H1 (cell line): ENCODE measurements at regions of chr17 and their contacts with region 1.

Region 1: GRCh38 chr17:73782641-73783381 is 138.6 kb upstream of the SDK2 start:
- DNase-seq: no peak
- H3K4me3 ChIP-seq: no peak overlapping the region
- H3K27ac ChIP-seq: no peak overlapping the region
- H3K4me1 ChIP-seq: peaks cover 7 to 32% (median 16%) of the 10 kb centered on the region in 4 experiments
- H3K27me3 ChIP-seq: no peaks in the 10 kb centered on the region; a peak in 1 of 7 replicates
- CTCF ChIP-seq: peak; percentile 70 to 87 (median 86)
- EP300 ChIP-seq: no peak
- POLR2A ChIP-seq: no peak
- RAD21 ChIP-seq: peak; percentile 80 to 90

Region 2: GRCh38 chr17:73770115-73770848 is 12.5 kb before region 1 on chr17:
- CTCF ChIA-PET with region 1: interaction called, 28 read pairs
- POLR2A ChIA-PET with region 1: interaction called, 3 read pairs
- DNase-seq: no peak
- H3K4me3 ChIP-seq: no peak overlapping the region
- H3K27ac ChIP-seq: no peak overlapping the region
- H3K4me1 ChIP-seq: no peaks in the 10 kb centered on the region; a peak in 1 of 7 replicates
- H3K27me3 ChIP-seq: no peaks in the 10 kb centered on the region
- CTCF ChIP-seq: no peak
- EP300 ChIP-seq: no peak
- POLR2A ChIP-seq: no peak
- RAD21 ChIP-seq: no peak

Region 3: DNA sequence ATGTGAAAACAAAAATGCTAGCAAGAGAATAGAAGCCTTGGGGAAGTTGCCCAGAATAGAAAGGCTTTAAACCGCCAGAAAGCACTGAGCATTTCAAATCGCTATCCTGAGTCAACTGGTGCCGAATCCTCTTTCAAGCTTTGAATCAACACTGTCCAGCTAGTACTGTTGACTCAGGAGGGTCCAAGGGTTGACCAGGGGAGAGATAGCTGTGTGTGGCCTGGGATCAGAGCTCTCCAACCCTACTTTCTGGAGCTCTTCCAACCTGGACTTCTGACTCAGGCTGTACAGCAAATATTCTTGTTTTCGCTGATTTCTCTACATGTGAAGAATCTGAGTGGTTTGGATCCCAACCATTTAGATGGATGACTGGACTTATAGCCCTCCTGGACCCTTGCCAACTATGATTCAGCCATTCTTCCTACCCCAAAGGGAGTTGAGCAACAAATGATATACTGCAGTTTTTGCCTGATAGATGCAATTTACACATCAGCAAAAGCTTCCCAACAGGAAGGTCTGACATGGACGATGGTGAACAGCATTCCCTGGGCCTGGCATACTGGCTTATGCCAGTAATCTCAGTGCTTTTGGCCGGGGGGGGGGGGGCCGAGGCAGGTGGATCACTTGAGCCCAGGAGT is 15.4 kb after region 1 on chr17:
- CTCF ChIA-PET with region 1: interaction called, 18 read pairs
- POLR2A ChIA-PET with region 1: no interaction called
- DNase-seq: no peak
- H3K4me3 ChIP-seq: no peak overlapping the region
- H3K27ac ChIP-seq: no peak overlapping the region
- H3K4me1 ChIP-seq: no peaks in the 10 kb centered on the region; a peak in 1 of 7 replicates
- H3K27me3 ChIP-seq: no peaks in the 10 kb centered on the region; a peak in 1 of 7 replicates
- CTCF ChIP-seq: no peak
- EP300 ChIP-seq: no peak
- POLR2A ChIP-seq: no peak
- RAD21 ChIP-seq: no peak

Region 4: DNA sequence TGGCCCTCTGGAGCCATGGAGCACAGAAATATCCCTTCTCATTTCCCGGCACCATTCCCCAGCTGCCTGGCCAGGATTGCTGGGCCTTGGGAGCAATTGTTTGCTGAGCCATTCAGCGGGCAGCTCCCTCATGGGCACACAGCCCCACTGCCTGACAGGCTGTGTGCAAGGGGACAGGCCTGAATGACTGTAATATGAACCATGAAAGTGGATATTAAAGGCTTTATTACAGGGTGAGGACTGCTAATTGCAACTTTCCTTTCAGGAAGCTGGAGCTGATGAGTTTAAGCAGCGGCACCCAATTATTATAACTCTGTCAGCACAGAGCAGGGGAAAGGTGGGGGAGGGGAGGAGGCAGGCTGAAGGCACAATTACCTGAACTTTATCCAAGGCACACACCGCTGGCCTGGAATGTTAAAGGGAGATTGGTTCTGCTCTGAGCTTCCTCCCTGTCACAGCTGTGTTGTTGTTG is 21.2 kb after region 1 on chr17:
- CTCF ChIA-PET with region 1: interaction called, 18 read pairs
- POLR2A ChIA-PET with region 1: no interaction called
- DNase-seq: no peak
- H3K4me3 ChIP-seq: no peak overlapping the region
- H3K27ac ChIP-seq: no peak overlapping the region
- H3K4me1 ChIP-seq: peaks cover 0 to 8% (median 6%) of the 10 kb centered on the region in 4 experiments; a peak in 4 of 7 replicates
- H3K27me3 ChIP-seq: no peaks in the 10 kb centered on the region; a peak in 2 of 7 replicates
- CTCF ChIP-seq: no peak
- EP300 ChIP-seq: no peak
- POLR2A ChIP-seq: no peak
- RAD21 ChIP-seq: no peak